CD4-positive, alpha-beta memory T cell (primary cell): ENCODE measurements at regions of chr16 and their contacts with region 1.

Region 1: GRCh38 chr16:31202414-31203375 is at the start of gene PYCARD:
- DNase-seq: peak in 4 of 5 donors; percentile 37 to 49 (median 44)
- H3K4me3 ChIP-seq: peak within 1 kb of the TSS; percentile 57 to 94
- H3K4me3 Mint-ChIP-seq: peak within 1 kb of the TSS; percentile 88 to 94 (median 90)
- H3K27ac ChIP-seq: peak within 1 kb of the TSS; percentile 59
- H3K27ac Mint-ChIP-seq: peak within 1 kb of the TSS; percentile 70 to 92 (median 84)
- H3K4me1 ChIP-seq: peaks cover 49% of the 10 kb centered on the region
- H3K4me1 Mint-ChIP-seq: peaks cover 35 to 65% (median 46%) of the 10 kb centered on the region in 4 donors
- H3K27me3 ChIP-seq: no peaks in the 10 kb centered on the region
- H3K27me3 Mint-ChIP-seq: no peaks in the 10 kb centered on the region
- total RNA-seq, gene PYCARD: 25.9 to 26.6 TPM

Region 2: GRCh38 chr16:31117391-31118197 is 85.1 kb before region 1 on chr16 and contains the start of gene KAT8:
- CTCF ChIA-PET with region 1: interaction called, 3 read pairs
- POLR2A ChIA-PET with region 1: interaction called, 14 read pairs
- intact Hi-C with region 1: no loop called
- DNase-seq: peak; percentile 98 to 99 (median 98)
- H3K4me3 ChIP-seq: peak within 1 kb of the TSS; percentile 63 to 76
- H3K4me3 Mint-ChIP-seq: peak within 1 kb of the TSS; percentile 83 to 93 (median 89)
- H3K27ac ChIP-seq: peak within 1 kb of the TSS; percentile 89
- H3K27ac Mint-ChIP-seq: peak within 1 kb of the TSS; percentile 80 to 98 (median 95)
- H3K4me1 ChIP-seq: peaks cover 11% of the 10 kb centered on the region
- H3K4me1 Mint-ChIP-seq: peaks cover 9 to 19% (median 13%) of the 10 kb centered on the region in 4 donors
- H3K27me3 ChIP-seq: no peaks in the 10 kb centered on the region
- H3K27me3 Mint-ChIP-seq: no peaks in the 10 kb centered on the region
- total RNA-seq, gene KAT8: 90.8 to 94.2 TPM

Region 3: DNA sequence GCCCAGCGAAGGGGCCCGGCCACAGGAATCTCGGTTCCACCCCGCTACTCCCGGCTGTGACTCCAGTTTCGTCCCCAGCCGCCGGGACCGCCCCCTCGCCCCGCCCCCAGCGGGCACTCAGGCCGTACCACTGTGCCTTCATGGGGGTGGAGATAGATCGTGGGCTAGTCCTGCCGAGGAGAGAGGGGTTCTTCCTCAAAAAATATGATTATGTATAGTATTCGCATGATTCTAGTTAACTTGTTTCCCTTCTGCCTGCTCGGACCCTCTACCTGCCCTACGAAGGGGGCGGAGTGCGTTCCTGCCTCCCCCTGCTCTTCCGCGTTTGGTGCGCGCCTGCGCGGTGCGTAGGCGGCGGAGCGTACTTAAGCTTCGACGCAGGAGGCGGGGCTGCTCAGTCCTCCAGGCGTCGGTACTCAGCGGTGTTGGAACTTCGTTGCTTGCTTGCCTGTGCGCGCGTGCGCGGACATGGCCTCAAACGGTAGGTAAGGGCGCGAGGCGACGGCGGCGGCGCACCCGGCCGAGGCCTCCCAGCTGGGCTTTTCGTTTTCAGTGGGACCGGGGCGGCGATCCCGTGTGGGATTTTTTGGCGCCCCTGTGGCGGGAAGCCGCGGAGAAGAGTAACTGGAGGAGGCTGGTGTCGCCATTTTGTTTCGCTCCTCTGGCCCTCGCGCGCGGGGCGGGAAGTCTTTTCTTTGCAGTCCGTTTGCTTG is 22.8 kb before region 1 on chr16 and contains the start of gene FUS:
- CTCF ChIA-PET with region 1: interaction called, 11 read pairs
- POLR2A ChIA-PET with region 1: interaction called, 119 read pairs
- intact Hi-C with region 1: loop called (anchors 2 kb)
- DNase-seq: peak; percentile 89 to 95 (median 94)
- H3K4me3 ChIP-seq: peak within 1 kb of the TSS; percentile 96 to 97
- H3K4me3 Mint-ChIP-seq: peak within 1 kb of the TSS; percentile 97 to 99 (median 98)
- H3K27ac ChIP-seq: peak within 1 kb of the TSS; percentile 89
- H3K27ac Mint-ChIP-seq: peak within 1 kb of the TSS; percentile 95 to 100 (median 99)
- H3K4me1 ChIP-seq: peaks cover 66% of the 10 kb centered on the region
- H3K4me1 Mint-ChIP-seq: peaks cover 41 to 77% (median 54%) of the 10 kb centered on the region in 4 donors
- H3K27me3 ChIP-seq: no peaks in the 10 kb centered on the region
- H3K27me3 Mint-ChIP-seq: no peaks in the 10 kb centered on the region
- total RNA-seq, gene FUS: 500 to 536 TPM

Region 4: DNA sequence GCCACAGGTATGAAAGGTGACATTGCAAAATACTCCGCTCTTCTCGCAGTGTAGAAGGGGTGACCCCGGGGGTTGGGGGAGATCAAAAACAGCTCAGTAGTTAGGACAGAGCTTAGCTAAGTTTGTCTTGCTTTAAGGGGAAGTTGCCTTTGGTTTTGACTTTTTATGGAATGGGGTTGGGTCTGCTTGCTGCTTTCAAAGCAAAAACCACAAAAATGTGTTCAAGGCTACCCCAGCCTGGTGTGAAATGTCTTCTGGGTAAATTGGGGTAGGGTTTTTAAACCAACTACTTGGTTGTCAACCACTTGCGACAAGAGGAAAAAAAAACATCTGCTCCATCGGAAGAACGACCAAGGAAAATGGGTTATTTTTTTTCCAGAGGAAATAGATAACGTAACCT is 16.5 kb before region 1 on chr16:
- CTCF ChIA-PET with region 1: interaction called, 11 read pairs
- POLR2A ChIA-PET with region 1: interaction called, 19 read pairs
- intact Hi-C with region 1: no loop called
- DNase-seq: no peak
- H3K4me3 ChIP-seq: no peak overlapping the region
- H3K4me3 Mint-ChIP-seq: peak overlapping the region in 7 of 8 donors; percentile 1 to 68 (median 27)
- H3K27ac ChIP-seq: no peak overlapping the region
- H3K27ac Mint-ChIP-seq: peak overlapping the region in 5 of 7 donors; percentile 6 to 99 (median 54)
- H3K4me1 ChIP-seq: peaks cover 66% of the 10 kb centered on the region
- H3K4me1 Mint-ChIP-seq: peaks cover 60 to 97% (median 78%) of the 10 kb centered on the region in 4 donors
- H3K27me3 ChIP-seq: no peaks in the 10 kb centered on the region
- H3K27me3 Mint-ChIP-seq: no peaks in the 10 kb centered on the region

Region 5: DNA sequence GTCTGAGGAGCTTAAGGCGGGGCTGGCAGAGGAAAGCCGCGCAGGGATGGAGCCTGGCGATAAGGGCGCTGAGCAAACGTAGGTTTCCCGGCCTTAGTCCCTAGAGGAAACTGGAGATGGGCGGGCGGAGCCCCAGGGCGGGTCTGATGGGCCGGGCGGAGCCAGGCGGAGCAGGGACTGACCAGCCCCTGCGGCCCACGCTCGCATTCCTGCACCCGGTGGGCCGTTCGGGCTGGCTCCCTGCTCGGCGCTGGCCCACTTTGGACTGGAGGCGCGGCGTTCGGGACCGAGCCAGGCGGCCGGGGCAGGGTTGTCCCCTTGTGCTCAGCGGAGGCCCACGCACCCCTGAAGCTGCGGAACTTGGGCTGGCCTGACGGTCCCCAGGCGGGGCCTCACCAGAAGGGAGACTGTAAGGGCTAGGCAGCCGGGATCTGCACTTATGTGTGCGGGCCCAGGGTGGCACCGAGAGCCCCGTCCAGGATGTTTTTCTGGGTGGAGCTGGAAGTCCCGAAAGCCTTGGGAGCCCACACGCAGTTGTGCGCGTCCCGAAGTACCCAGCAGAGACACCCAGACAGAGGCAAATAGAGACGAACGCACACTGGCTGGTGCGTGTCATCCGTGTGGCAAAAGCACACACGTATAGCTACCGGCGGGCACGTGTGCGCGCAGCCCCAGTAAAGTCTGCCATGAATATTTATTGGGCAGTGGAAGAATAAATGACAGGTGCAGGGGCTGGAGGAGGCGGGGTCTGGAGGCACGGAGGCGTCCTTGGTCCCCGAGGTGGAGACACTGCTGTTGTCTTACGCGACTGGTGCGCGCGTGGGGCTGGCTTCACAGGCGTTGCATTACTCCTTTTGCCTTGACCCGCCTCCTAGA is 12.8 kb after region 1 on chr16:
- CTCF ChIA-PET with region 1: interaction called, 3 read pairs
- POLR2A ChIA-PET with region 1: interaction called, 31 read pairs
- intact Hi-C with region 1: no loop called
- DNase-seq: peak in 2 of 5 donors; percentile 14 to 58
- H3K4me3 ChIP-seq: peak overlapping the region in 1 of 2 donors; percentile 38
- H3K4me3 Mint-ChIP-seq: peak overlapping the region; percentile 71 to 95 (median 82)
- H3K27ac ChIP-seq: no peak overlapping the region
- H3K27ac Mint-ChIP-seq: peak overlapping the region in 1 of 7 donors; percentile 65
- H3K4me1 ChIP-seq: peaks cover 23% of the 10 kb centered on the region
- H3K4me1 Mint-ChIP-seq: peaks cover 16 to 22% (median 18%) of the 10 kb centered on the region in 4 donors
- H3K27me3 ChIP-seq: peaks cover 26% of the 10 kb centered on the region
- H3K27me3 Mint-ChIP-seq: peaks cover 27 to 32% of the 10 kb centered on the region in 2 donors

Region 6: DNA sequence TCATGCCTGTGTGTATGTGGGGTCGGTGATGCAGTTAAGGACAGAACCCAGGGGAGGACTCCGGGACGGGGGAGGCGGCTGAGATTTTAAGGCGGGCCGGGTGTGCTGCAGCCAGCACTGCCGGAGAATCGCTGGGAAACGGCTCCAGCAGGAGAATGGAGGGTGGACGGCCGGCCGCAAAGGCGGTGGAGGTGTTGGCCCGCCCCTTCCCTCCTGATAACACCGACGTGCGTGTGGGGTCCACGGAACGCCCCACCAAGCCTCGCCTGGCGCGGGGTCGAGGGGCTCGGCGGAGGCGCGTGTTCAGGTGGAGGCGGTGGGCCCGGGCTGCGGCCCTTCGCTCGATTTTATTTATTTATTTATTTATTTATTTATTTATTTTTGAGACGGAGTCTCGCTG is 239.3 kb after region 1 on chr16:
- CTCF ChIA-PET with region 1: no interaction called
- POLR2A ChIA-PET with region 1: no interaction called
- intact Hi-C with region 1: loop called (anchors 2 kb)
- DNase-seq: no peak
- H3K4me3 ChIP-seq: no peak overlapping the region
- H3K4me3 Mint-ChIP-seq: peak overlapping the region; percentile 75 to 91 (median 84)
- H3K27ac ChIP-seq: no peak overlapping the region
- H3K27ac Mint-ChIP-seq: peak overlapping the region in 2 of 7 donors; percentile 3 to 73
- H3K4me1 ChIP-seq: no peaks in the 10 kb centered on the region
- H3K4me1 Mint-ChIP-seq: peaks cover 1 to 9% (median 6%) of the 10 kb centered on the region in 4 donors
- H3K27me3 ChIP-seq: no peaks in the 10 kb centered on the region
- H3K27me3 Mint-ChIP-seq: peaks cover 0 to 1% of the 10 kb centered on the region in 2 donors